ENCODE measurements at regions of chr17 and their contacts with region 1.

Region 1: DNA sequence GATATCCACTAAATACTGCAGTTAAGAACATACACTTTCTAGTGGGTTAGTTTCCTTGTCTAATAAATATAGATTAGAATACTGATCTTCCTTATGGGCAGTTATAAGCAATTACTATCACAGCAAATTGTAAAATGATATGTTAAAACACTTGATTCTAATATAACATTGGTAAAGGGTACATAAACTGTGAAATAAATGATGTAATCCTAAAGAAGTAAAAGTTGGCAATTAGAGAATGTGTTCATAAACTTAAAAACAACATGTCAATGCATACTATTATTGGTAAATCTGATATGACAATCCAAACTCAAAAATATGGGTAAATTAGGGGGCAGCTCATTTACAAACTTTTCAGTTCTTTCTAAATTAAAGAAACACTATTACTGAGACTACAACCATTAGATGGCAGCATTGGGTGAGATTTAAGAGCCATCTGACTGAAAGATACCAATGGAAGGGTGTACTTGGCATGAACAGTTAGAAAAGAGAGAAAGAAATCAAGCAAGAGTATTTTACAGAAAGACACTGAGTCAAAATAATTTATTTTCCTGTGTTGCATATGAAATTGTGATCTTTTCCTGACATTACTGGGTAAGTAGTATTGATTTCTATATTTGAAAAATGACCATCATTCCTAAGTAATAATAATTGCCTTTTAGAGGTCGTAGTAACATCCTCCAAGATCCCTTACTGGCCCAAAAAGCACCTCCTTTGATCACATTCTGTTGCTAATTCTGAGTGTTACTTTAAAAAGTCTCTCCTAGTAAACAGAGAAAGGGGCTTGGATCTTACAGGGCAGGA is 119.6 kb downstream of the SPAG9 start:
- DNase-seq: peak; percentile 56
- CTCF ChIP-seq: peak; percentile 58

Region 2: GRCh38 chr17:50904521-50905459 is 96.2 kb before region 1 on chr17:
- in situ Hi-C with region 1: no loop called
- DNase-seq: no peak
- CTCF ChIP-seq: no peak

Region 3: DNA sequence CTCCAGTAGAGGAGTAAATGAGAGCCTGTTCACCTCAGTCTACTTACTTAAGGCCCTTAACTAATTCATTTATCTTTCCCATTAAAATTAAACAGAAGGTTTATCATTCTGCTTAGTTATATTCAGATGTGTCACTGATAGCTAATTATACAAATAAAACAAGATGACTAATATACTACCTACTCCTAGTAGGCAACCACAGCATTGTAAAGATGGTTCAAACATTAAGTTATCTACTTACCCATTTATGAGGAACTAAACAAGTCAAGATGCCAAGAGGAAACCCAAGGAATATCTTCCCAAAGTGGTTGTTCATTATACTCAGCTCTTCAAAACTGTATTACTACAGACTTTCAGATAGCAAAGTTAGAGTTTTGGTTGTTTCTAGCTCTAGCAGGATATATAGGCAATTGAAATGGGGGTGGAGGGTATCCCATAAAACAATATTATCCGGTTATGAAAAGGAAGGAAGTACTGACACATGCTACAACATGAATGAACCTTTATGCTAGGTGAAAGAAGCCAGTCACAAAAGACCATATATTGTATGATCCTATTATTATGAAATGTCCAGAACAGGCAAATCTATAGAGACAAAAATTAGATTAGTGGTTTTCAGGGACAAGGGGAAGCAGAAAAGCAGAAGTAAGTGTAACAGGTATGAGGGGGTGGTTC is 63.2 kb after region 1 on chr17:
- in situ Hi-C with region 1: loop called (anchors 10 kb)
- DNase-seq: no peak
- CTCF ChIP-seq: no peak

Region 4: DNA sequence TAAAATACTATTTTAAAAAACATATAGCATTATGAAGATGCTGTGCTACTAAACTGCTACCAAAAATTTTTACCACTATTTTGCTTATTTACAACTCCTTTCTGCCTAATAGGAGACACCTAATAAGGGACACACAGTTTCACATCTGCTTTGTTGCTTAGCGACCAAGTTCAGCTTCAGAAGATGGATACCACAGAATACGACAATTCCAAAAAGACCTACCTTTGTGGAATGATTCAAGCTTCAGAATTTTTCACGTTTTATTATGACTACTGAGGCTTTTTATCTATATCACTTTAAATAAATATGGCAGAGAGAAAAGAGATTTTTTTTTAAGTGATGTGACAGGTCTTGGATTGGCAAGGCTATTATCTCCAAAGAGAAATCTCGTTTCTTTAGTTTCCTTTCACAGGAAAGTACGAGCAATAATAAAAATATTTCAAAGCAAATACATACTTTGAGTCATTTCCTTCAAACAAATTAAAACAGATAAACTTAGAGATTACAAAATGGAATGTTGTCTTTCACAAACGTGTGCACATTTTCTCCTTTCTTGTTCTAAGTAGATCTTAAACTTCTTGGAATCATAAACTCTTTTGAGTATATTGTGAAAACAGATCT is 84.3 kb after region 1 on chr17:
- in situ Hi-C with region 1: no loop called
- DNase-seq: no peak
- CTCF ChIP-seq: no peak

Region 5: DNA sequence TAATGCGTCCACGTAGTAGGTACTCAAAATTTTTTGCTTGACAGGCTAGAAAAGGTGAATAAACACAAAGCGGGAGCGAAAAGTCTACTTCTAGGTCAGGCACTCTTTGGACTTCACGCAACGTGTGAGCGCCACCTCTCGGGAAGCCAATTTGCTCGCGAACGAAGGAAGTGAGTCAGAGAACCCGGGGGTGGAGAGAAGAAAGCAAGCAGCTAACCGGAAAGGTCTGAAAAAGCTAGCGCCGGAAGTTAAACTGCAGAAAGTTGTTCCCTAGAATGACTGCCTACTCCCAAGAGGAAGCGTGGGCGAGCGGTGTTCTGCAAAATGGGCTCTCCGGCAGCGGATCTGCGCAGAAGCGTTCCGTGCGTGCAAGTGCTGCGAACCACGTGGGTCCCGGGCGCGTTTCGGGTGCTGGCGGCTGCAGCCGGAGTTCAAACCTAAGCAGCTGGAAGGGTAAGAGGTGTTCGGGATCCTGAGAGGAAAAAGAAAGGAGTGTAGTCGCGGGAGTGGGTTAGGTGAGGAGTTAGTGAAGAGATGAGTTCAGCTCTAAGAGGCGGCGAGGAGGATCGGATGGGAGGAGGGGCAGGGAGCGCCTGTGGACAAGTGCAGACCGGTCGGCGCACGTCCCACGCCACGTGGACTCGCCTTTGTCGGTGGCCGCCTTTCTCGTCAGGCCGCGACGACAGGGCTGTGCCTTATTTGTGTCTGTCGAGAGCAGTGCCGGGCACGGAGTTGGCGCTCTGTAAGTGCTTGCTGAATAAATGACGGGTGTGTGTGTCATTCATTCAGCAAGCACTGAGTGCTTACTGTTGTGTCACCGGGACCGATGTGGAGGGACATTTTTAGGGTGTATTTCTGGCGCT is 152.4 kb after region 1 on chr17 and contains the start of gene NME1:
- in situ Hi-C with region 1: loop called (anchors 10 kb)
- DNase-seq: peak; percentile 93
- CTCF ChIP-seq: peak; percentile 90

Measured in GM13977 (cell line).